Aorta (tissue), 5 donors: ENCODE measurements at regions of chr10 and their contacts with region 1.

Region 1: GRCh38 chr10:89369156-89370105 is 8.4 kb upstream of the IFIT1B start:
- DNase-seq: no peak
- ATAC-seq: peak; percentile 33
- H3K4me3 ChIP-seq: no peak overlapping the region
- H3K27ac ChIP-seq: peak overlapping the region in 1 of 2 donors; percentile 36
- H3K4me1 ChIP-seq: peaks cover 0 to 6% of the 10 kb centered on the region in 2 donors
- H3K27me3 ChIP-seq: no peaks in the 10 kb centered on the region

Region 2: DNA sequence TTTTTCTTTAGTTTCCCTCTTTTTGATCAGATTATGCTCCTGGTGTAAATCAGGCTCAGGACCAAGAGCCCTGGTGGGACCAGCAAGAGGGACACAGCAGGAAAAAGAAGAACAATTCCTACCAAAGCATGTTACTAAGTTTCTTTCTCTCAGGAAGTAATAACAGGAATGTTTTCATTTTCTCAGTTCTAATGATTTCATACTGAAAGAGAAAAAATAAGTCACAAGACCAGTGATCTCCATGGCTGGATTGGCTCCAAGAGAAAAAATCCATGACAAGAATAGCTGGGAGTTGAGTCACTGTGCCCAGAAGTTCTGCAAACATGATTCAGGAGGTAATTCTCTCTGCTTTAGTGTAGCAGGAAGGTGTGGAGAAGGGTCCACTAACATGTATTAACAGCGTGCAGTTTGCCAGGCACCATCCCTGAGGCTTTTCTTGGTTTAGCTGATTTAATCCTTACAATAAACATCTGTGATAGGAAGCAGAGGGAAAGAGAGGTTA is 91.3 kb before region 1 on chr10:
- intact Hi-C with region 1: loop called in 1 of 2 experiments (anchors 5 kb)
- DNase-seq: no peak
- ATAC-seq: peak; percentile 78
- H3K4me3 ChIP-seq: peak overlapping the region; percentile 20 to 41
- H3K27ac ChIP-seq: peak overlapping the region; percentile 98
- H3K4me1 ChIP-seq: peaks cover 4 to 7% of the 10 kb centered on the region in 2 donors
- H3K27me3 ChIP-seq: no peaks in the 10 kb centered on the region

Region 3: DNA sequence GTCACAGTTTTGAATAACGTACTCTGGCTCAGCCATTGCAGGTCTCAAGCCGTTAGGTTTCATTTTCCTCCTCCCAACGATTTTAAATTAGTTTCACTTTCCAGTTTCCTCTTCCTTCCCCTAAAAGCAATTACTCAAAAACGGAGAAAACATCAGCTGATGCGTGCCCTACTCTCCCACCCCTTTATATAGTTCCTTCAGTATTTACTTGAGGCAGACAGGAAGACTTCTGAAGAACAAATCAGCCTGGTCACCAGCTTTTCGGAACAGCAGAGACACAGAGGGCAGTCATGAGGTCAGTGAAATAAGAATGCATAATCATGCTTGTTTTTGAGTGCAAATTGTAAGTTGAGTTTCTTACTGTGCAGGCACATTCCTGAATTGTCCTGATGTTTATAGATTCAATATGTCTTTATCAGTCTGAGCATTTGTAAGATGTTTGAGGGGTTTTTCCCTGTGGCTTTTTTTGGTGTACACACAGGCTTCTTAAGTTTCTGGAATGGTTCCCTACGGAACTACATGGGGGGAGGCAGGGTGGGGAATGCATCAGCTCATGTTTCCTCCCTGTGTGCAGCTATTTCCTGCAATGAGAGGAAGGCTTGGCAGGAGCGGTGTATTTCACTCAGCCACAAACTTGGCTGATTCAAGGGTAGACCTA is 41.5 kb before region 1 on chr10 and contains the start of gene IFIT3:
- intact Hi-C with region 1: loop called in 1 of 2 experiments (anchors 5 kb)
- DNase-seq: peak in 1 of 2 donors; percentile 80
- ATAC-seq: peak; percentile 87
- H3K4me3 ChIP-seq: peak within 1 kb of the TSS; percentile 65 to 84
- H3K27ac ChIP-seq: peak within 1 kb of the TSS in 1 of 2 donors; percentile 80
- H3K4me1 ChIP-seq: peaks cover 0 to 2% of the 10 kb centered on the region in 2 donors
- H3K27me3 ChIP-seq: no peaks in the 10 kb centered on the region
- total RNA-seq, gene IFIT3: 14.2 to 19.0 TPM